ENCODE measurements at regions of chr15 and their contacts with region 1.

Region 1: GRCh38 chr15:82262422-82263026 is at the starts of genes EFL1 and SAXO2:
- DNase-seq: peak; percentile 95
- H3K4me3 Mint-ChIP-seq: peak within 1 kb of the TSS; percentile 88
- H3K27ac Mint-ChIP-seq: peak within 1 kb of the TSS; percentile 83
- H3K4me1 Mint-ChIP-seq: peaks cover 27% of the 10 kb centered on the region
- H3K27me3 Mint-ChIP-seq: no peaks in the 10 kb centered on the region
- total RNA-seq, gene EFL1: 27.7 to 28.1 TPM
- total RNA-seq, gene SAXO2: 0.81 TPM in 1 of 2 experiments, not detected in the other

Region 2: DNA sequence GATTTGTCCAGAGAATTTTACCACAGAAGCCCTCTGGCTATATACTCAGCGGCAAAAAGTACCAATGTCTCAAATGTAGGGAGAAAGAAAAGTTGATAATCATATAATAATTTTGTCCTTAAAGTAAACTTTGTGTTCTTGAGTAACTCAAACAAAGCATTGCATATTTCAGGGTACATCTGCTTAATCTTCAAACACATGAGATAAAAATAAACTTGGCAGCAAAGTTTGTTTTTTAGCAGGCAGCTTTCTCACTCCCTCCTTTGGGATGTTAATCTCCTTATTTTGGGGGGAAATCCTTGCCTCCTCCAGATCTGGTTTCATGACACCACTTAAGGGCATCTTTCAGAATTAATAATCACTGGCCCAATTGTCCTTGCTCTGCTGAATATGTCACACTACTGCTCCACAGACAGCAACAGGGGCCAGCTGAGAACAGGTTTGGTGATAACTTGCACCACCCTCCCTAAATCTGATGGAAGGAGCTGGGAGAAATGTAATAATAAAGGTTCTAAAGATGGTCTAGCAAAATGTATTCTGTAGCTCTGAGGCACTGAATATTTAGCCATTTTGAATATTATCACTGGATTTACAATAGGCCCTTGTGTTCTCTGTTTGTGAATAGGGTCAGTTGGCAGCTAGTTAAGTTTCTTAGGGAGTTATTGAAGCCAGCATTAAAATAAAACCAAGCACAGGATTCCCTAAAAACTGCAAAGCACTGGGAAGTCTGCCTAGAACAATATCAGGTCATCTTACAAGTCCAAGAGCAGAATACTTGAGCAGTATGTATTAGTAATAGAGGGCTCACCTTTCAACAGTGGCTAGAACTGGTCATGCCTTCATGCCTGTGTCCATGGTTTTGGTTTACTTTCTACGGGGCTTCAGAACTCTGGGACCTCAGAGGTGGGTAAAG is 79.1 kb before region 1 on chr15:
- CTCF ChIA-PET with region 1: no interaction called
- POLR2A ChIA-PET with region 1: no interaction called
- intact Hi-C with region 1: no loop called
- DNase-seq: no peak
- H3K4me3 Mint-ChIP-seq: no peak overlapping the region
- H3K27ac Mint-ChIP-seq: no peak overlapping the region
- H3K4me1 Mint-ChIP-seq: no peaks in the 10 kb centered on the region
- H3K27me3 Mint-ChIP-seq: no peaks in the 10 kb centered on the region

Region 3: GRCh38 chr15:82292271-82292670 is 29.7 kb after region 1 on chr15:
- CTCF ChIA-PET with region 1: no interaction called
- POLR2A ChIA-PET with region 1: no interaction called
- intact Hi-C with region 1: loop called (anchors 2 kb)
- DNase-seq: no peak
- H3K4me3 Mint-ChIP-seq: no peak overlapping the region
- H3K27ac Mint-ChIP-seq: no peak overlapping the region
- H3K4me1 Mint-ChIP-seq: peaks cover 21% of the 10 kb centered on the region
- H3K27me3 Mint-ChIP-seq: no peaks in the 10 kb centered on the region

Region 4: GRCh38 chr15:82306791-82307713 is 44.5 kb after region 1 on chr15:
- CTCF ChIA-PET with region 1: no interaction called
- POLR2A ChIA-PET with region 1: no interaction called
- intact Hi-C with region 1: no loop called
- DNase-seq: peak; percentile 5
- H3K4me3 Mint-ChIP-seq: no peak overlapping the region
- H3K27ac Mint-ChIP-seq: no peak overlapping the region
- H3K4me1 Mint-ChIP-seq: peaks cover 9% of the 10 kb centered on the region
- H3K27me3 Mint-ChIP-seq: no peaks in the 10 kb centered on the region